Panc1 (cell line): ENCODE measurements at regions of chr2 and their contacts with region 1.

Region 1: GRCh38 chr2:151826737-151827157 is 1.5 kb downstream of the ARL5A start:
- DNase-seq: no peak
- ATAC-seq: no peak
- H3K4me3 ChIP-seq: peak overlapping the region; percentile 83 to 99
- H3K27ac ChIP-seq: peak overlapping the region; percentile 92
- H3K4me1 ChIP-seq: peaks cover 28% of the 10 kb centered on the region
- H3K27me3 ChIP-seq: no peaks in the 10 kb centered on the region
- CTCF ChIP-seq: no peak

Region 2: DNA sequence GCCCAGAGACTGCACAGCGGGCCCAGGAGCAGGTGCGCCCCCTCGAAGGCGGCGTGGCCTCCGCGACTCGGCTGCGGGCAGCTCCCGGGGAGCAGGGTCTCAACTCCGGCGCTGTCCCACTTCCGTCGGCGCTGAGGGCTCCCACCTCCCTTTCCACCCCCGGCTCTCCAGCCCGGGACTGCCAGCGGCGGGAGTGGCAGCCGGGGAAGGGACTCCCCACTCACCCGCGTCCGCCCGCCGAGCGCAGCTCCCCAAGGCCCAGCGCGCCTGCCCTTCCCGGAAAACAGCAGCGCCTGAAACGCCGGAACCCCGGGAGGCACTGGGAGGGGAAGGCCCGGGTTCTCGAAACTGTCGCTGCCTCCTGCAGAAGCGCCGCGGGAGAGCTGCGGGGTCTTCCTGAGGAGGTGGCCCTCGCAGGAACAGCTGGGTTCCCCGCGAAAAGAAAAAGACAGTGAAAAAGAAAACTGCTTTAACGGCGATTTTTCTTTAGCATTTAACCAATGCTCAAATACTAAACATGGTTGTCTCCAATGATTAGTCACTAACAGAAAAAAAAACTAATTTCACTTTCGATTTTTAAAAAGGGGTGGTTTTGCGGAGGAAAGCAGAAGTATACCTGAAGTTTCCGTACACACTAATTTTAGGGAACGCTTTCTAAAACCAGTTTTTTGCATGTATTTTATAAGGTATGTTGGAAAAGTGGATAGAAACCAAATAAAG is 537.2 kb before region 1 on chr2 and contains the start of gene NMI:
- CTCF ChIA-PET with region 1: no interaction called
- POLR2A ChIA-PET with region 1: interaction called, 16 read pairs
- in situ Hi-C with region 1: no loop called
- intact Hi-C with region 1: no loop called
- DNase-seq: no peak
- ATAC-seq: peak; percentile 86
- H3K4me3 ChIP-seq: peak within 1 kb of the TSS; percentile 57 to 74
- H3K27ac ChIP-seq: peak within 1 kb of the TSS; percentile 95
- H3K4me1 ChIP-seq: peaks cover 17% of the 10 kb centered on the region
- H3K27me3 ChIP-seq: no peaks in the 10 kb centered on the region
- CTCF ChIP-seq: peak; percentile 24; the same call in 1 of the 2 replicates
- total RNA-seq, gene NMI: 24.5 TPM

Region 3: DNA sequence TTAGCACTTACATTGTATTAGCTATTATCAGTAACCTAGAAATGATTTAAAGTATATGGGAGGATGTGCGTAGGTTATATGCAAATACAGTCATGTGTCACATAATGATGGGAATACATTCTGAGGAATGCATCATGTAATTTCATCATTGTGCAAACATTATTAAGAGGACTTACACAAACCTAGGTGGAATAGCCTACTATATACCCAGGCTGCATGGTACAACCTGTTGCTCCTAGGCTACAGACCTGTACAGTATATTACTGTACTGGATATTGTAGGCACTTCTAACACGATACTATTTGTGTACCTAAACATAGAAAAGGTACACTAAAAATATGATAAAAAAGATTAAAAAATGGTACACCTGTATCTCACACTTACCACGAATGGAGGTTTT is 409.1 kb before region 1 on chr2:
- CTCF ChIA-PET with region 1: no interaction called
- POLR2A ChIA-PET with region 1: no interaction called
- in situ Hi-C with region 1: no loop called
- intact Hi-C with region 1: no loop called
- DNase-seq: no peak
- ATAC-seq: no peak
- H3K4me3 ChIP-seq: no peak overlapping the region
- H3K27ac ChIP-seq: no peak overlapping the region
- H3K4me1 ChIP-seq: no peaks in the 10 kb centered on the region
- H3K27me3 ChIP-seq: no peaks in the 10 kb centered on the region
- CTCF ChIP-seq: no peak

Region 4: DNA sequence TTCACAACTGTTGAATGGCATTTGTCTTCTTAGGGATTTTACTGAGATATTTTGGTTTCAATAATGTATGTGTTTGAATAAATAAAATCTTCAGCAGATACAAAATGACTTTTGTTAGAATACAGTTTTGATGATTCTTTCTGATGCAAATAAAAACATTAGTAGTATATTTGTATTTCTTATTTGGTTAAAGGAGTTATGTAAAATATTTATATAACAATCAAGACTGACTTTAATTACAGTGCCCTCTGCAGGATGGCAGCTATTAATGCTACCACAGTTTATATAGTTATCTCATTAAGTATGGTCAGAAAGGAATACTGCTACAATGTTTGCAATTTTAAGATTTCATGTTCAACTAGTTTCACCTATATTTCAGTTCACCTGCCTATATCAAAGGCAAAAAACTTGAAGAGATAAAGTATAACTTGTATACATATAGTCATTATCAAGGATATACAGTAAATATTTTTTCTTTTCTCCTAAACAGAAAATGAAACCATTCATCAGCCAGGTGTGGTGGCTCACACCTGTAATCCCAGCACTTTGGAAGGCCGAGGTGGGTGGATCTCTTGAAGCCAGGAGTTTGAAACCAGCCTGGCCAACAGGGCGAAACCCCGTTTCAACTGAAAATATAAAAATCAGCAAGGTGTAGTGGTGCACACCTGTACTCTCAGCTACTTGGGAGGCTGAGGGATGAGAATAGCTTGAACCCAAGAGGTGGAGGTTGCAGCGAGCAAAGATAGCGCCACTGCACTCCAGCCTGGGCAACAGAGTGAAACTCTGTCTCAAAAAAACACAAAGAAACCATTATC is 18.3 kb before region 1 on chr2:
- CTCF ChIA-PET with region 1: interaction called, 16 read pairs
- POLR2A ChIA-PET with region 1: no interaction called
- in situ Hi-C with region 1: no loop called
- intact Hi-C with region 1: no loop called
- DNase-seq: no peak
- ATAC-seq: 0 out of 2 replicates have a peak, but pooled peaks have one; percentile 63
- H3K4me3 ChIP-seq: no peak overlapping the region
- H3K27ac ChIP-seq: no peak overlapping the region
- H3K4me1 ChIP-seq: no peaks in the 10 kb centered on the region
- H3K27me3 ChIP-seq: no peaks in the 10 kb centered on the region
- CTCF ChIP-seq: peak; percentile 65

Region 5: GRCh38 chr2:152710713-152711112 is 884.0 kb after region 1 on chr2:
- CTCF ChIA-PET with region 1: no interaction called
- POLR2A ChIA-PET with region 1: no interaction called
- in situ Hi-C with region 1: no loop called
- intact Hi-C with region 1: no loop called
- DNase-seq: no peak
- ATAC-seq: no peak
- H3K4me3 ChIP-seq: no peak overlapping the region
- H3K27ac ChIP-seq: no peak overlapping the region
- H3K4me1 ChIP-seq: peaks cover 16% of the 10 kb centered on the region
- H3K27me3 ChIP-seq: no peaks in the 10 kb centered on the region
- CTCF ChIP-seq: no peak